Heart left ventricle (tissue), 16 donors: ENCODE measurements at regions of chr17 and their contacts with region 1.

Region 1: GRCh38 chr17:14300575-14301278 is at the start of gene HS3ST3B1:
- DNase-seq: peak; percentile 98 to 99 (median 98)
- ATAC-seq: peak; percentile 93 to 97 (median 96)
- H3K4me3 ChIP-seq: peak within 1 kb of the TSS; percentile 53 to 78 (median 62)
- H3K27ac ChIP-seq: peak within 1 kb of the TSS; percentile 35 to 90 (median 74)
- H3K4me1 ChIP-seq: peaks cover 0 to 76% (median 48%) of the 10 kb centered on the region in 12 donors
- H3K27me3 ChIP-seq: peaks cover 26 to 86% (median 63%) of the 10 kb centered on the region in 9 donors
- CTCF ChIP-seq: peak in 2 of 12 donors; percentile 22 to 33
- POLR2A ChIP-seq: peak; percentile 33 to 86
- total RNA-seq, gene HS3ST3B1: 1.8 to 3.9 (median 3.4) TPM

Region 2: DNA sequence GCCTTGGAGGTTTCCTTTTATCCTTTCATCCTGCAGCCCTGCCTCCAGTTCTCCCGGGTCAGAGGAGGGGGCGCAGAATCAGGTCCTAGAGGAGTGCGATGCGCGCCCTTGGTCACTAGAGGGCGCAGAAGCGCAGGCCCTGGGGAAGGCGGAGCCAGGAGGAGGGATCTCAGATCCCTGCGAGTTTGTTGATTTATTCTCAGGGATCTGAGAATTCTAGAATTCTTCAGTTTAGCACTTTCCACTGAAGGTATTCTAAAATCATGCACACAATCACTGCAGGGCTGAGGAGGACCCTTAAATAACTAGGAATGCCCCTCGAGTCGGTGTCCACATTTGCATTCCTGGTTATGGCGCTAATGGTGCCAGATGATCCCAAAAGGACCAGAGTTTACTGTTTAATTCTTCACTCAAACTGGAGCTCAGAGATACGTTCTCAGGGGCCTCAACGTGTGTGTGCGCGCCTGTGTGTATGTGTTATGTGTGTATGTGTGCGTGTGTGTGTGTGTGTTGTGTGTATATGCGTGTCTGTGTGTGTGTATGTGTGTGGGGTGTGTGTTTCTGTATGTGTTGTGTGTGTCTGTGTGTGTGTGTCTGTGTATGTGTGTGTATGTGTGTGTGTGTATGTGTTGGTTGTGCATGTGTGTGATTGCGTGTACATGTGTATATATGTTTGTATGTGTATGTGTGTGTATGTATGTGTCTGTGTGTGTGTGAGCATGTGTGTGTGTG is 1276.0 kb before region 1 on chr17:
- intact Hi-C with region 1: loop called in 1 of 10 experiments (anchors 10 kb)
- DNase-seq: peak in 4 of 5 donors; percentile 38 to 79 (median 58)
- ATAC-seq: peak; percentile 69 to 88 (median 83)
- H3K4me3 ChIP-seq: peak overlapping the region in 6 of 12 donors; percentile 3 to 43 (median 27)
- H3K27ac ChIP-seq: no peak overlapping the region
- H3K4me1 ChIP-seq: peaks cover 0 to 9% (median 0%) of the 10 kb centered on the region in 12 donors
- H3K27me3 ChIP-seq: peaks cover 0 to 10% (median 0%) of the 10 kb centered on the region in 9 donors
- CTCF ChIP-seq: peak; percentile 88 to 99 (median 92)
- POLR2A ChIP-seq: no peak

Region 3: DNA sequence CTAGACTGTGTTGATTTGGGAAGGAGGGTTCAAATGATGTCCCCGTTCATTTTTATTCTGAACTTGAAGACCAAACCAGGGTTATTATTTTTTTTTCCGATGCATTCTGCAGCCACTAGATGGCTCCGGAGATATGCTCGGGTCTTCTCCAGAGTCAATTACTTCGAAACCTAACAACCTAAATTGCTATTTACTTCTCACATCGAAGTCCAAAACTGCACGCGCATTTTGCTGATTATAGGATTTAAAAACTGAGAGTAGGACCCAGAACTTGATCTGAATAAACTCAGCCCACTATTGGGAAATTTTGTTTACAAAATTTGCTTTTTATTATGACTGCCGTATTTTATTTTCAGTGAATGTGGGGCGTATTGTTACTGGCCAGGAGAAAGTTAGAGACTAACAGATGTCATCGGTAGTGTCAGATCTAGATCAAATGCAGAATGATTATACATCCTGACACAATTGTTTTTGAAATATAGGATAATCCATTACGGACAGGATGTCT is 962.8 kb before region 1 on chr17:
- intact Hi-C with region 1: loop called in 8 of 10 experiments (anchors 5 to 10 kb)
- DNase-seq: peak in 2 of 5 donors; percentile 20 to 23
- ATAC-seq: peak; percentile 20 to 57 (median 42)
- H3K4me3 ChIP-seq: peak overlapping the region in 10 of 12 donors; percentile 14 to 50 (median 42)
- H3K27ac ChIP-seq: peak overlapping the region in 3 of 12 donors; percentile 12 to 61 (median 22)
- H3K4me1 ChIP-seq: peaks cover 0 to 5% (median 0%) of the 10 kb centered on the region in 12 donors
- H3K27me3 ChIP-seq: peaks cover 0 to 3% (median 0%) of the 10 kb centered on the region in 9 donors
- CTCF ChIP-seq: peak; percentile 54 to 81 (median 71)
- POLR2A ChIP-seq: no peak

Region 4: GRCh38 chr17:13750816-13751722 is 549.7 kb before region 1 on chr17:
- intact Hi-C with region 1: loop called in 1 of 10 experiments (anchors 10 kb)
- DNase-seq: no peak
- ATAC-seq: no peak
- H3K4me3 ChIP-seq: no peak overlapping the region
- H3K27ac ChIP-seq: no peak overlapping the region
- H3K4me1 ChIP-seq: no peaks in the 10 kb centered on the region
- H3K27me3 ChIP-seq: peaks cover 0 to 3% (median 0%) of the 10 kb centered on the region in 9 donors
- CTCF ChIP-seq: no peak
- POLR2A ChIP-seq: no peak

Region 5: GRCh38 chr17:14069251-14070021 is 231.3 kb before region 1 on chr17 and contains the start of gene COX10:
- intact Hi-C with region 1: loop called in 7 of 10 experiments (anchors 2 to 10 kb)
- DNase-seq: peak; percentile 88 to 93 (median 91)
- ATAC-seq: peak; percentile 97 to 100 (median 99)
- H3K4me3 ChIP-seq: peak within 1 kb of the TSS; percentile 82 to 99 (median 94)
- H3K27ac ChIP-seq: peak within 1 kb of the TSS; percentile 84 to 96 (median 89)
- H3K4me1 ChIP-seq: peaks cover 0 to 39% (median 23%) of the 10 kb centered on the region in 12 donors
- H3K27me3 ChIP-seq: no peaks in the 10 kb centered on the region
- CTCF ChIP-seq: peak in 2 of 12 donors; percentile 5 to 15
- POLR2A ChIP-seq: peak in 1 of 2 donors; percentile 70
- total RNA-seq, gene COX10: 36.6 to 96.0 (median 55.4) TPM

Region 6: DNA sequence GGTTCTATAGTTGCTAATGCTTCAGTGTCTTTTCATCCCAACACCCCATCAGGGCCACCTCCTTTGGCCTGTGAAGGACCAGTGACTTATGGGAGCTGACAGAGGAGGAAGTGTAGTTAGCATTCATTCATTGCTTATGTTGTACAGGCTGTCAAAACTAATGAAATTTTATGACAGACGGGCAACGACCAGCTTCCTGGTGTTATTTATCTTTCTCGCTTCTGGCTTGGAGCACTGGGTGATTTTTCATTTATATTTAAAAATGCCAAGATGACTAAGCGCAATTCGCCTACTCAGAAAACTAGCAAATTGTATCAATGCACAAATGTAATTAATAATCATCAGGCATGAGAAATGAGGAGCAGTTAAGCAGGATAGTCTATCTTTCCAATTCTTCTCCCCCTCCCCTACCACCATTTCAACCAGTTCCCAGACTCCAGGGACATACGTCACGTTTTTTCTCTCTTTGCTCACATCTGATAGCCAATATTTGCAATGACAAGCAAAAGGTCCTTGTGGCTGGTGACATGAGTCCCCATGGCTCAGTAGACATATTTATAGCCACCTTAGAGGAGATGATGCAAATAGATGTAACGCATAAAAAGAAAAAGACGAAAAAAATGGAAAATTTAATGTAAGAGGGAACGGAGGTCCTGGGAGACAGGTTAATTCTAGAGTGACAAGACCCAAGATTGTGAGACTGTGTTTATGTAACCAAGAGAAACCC is 75.3 kb before region 1 on chr17:
- intact Hi-C with region 1: no loop called
- DNase-seq: no peak
- ATAC-seq: no peak
- H3K4me3 ChIP-seq: no peak overlapping the region
- H3K27ac ChIP-seq: no peak overlapping the region
- H3K4me1 ChIP-seq: no peaks in the 10 kb centered on the region
- H3K27me3 ChIP-seq: no peaks in the 10 kb centered on the region
- CTCF ChIP-seq: no peak
- POLR2A ChIP-seq: no peak

Region 7: GRCh38 chr17:14282726-14283125 is 18.0 kb before region 1 on chr17:
- intact Hi-C with region 1: no loop called
- DNase-seq: no peak
- ATAC-seq: no peak
- H3K4me3 ChIP-seq: no peak overlapping the region
- H3K27ac ChIP-seq: no peak overlapping the region
- H3K4me1 ChIP-seq: no peaks in the 10 kb centered on the region
- H3K27me3 ChIP-seq: peaks cover 0 to 31% (median 3%) of the 10 kb centered on the region in 9 donors
- CTCF ChIP-seq: no peak
- POLR2A ChIP-seq: no peak

Region 8: GRCh38 chr17:14926526-14927122 is 625.9 kb after region 1 on chr17:
- intact Hi-C with region 1: loop called in 1 of 10 experiments (anchors 10 kb)
- DNase-seq: peak in 3 of 5 donors; percentile 34 to 41 (median 35)
- ATAC-seq: no peak
- H3K4me3 ChIP-seq: no peak overlapping the region
- H3K27ac ChIP-seq: no peak overlapping the region
- H3K4me1 ChIP-seq: no peaks in the 10 kb centered on the region
- H3K27me3 ChIP-seq: peaks cover 0 to 16% (median 0%) of the 10 kb centered on the region in 9 donors
- CTCF ChIP-seq: peak; percentile 64 to 86 (median 76)
- POLR2A ChIP-seq: no peak

Region 9: DNA sequence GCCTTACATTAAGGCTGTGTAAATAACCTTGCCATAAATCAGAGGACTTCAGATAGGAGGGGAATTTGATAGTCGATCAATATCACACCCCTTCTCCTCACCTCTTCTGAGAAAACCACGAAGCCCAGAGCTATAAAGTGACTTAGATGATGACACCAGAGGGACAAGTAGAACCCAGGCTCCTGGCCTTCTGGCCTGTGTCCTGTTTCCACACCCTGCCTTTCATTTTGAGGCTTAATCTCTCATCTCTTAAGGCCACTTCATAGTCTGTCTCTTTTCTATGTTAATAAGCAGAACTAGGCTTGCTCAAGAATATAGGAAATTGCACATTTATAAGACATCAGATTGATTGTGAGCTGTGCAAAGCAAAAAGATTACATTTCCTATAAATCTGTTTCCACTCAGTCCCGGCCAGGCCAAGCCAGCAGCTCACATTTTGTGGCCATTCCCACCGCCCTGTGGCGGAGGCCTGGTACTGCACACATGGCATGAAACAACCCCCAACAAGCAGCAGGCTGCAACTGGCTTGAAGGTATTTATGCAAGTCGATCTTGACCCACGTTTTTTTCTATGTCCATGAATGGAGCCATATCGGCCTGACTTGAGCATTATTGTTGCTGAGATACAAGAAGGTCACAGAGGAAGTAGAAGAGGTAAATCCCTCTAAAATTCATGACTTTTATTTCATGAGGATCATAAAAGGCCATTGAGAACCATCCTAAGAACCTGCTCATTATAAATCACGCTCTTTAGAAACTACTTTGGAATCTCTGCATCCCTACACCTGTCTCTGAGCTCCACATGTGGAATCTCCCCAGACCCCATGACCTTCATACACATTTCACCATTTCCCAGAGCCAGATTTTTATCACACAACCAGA is 870.7 kb after region 1 on chr17:
- intact Hi-C with region 1: loop called in 1 of 10 experiments (anchors 5 kb)
- DNase-seq: peak; percentile 50 to 81 (median 68)
- ATAC-seq: peak; percentile 78 to 92 (median 88)
- H3K4me3 ChIP-seq: no peak overlapping the region
- H3K27ac ChIP-seq: no peak overlapping the region
- H3K4me1 ChIP-seq: peaks cover 0 to 4% (median 0%) of the 10 kb centered on the region in 12 donors
- H3K27me3 ChIP-seq: no peaks in the 10 kb centered on the region
- CTCF ChIP-seq: peak; percentile 63 to 87 (median 75)
- POLR2A ChIP-seq: no peak